ENCODE measurements at regions of chr15 and their contacts with region 1.

Region 1: GRCh38 chr15:70466895-70467529 is 296.3 kb downstream of the UACA start:
- DNase-seq: peak in 9 of 10 donors; percentile 38 to 95 (median 62)

Region 2: DNA sequence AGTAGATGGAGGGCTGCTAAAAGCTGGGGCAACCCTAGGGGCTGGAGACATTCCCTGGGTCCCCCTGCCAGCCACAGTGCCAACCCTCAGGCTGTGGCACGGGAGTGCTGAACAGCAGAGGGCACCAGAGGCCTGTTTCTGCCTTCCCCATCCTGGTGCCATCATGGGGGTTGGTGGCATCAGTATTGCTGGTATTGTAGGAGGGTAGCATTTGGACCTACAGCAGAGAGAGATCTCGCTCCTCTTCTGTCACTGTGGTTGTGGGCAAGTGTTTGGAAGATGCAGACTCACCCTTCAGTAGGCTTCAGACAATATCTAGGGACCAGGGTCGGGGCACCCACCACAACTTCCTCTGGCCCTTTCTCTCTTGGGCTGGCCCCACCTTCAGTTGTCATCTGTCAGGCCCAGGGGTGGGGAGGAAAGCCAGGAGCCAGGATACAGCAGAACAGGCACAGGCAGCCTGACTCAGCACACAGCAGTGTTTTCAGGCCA is 890.9 kb before region 1 on chr15:
- intact Hi-C with region 1: loop called (anchors 5 kb)
- DNase-seq: peak; percentile 45 to 95 (median 70)

Region 3: DNA sequence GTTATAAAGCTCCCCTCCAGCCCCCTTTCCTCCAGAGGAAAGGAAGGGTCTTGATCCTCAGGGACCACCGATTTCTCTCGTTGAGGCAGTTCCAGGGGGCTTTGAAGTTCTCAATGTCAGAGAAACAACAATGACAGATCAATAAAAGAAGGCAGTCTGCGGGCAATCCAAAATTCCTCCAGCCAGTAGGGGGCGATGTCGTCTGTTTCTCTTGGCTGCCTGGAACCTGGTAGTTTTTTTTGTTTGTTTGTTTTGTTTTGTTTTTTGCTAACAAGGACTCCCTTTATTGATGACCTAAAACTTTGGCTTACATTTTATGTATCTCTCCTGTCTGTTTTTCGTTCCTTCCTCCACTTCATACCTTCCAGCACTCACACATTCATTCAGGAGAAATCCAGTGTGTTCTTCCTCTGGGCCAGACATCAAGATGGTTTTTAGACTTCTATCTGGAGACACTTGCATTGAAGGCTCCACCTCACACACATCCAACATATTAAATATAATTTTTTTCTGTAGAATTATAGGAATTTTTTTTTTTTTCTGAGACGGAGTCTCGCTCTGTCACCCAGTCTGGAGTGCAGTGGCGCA is 737.8 kb before region 1 on chr15:
- intact Hi-C with region 1: loop called (anchors 10 kb)
- DNase-seq: peak in 1 of 10 donors; percentile 28

Region 4: GRCh38 chr15:70362886-70363285 is 104.1 kb before region 1 on chr15:
- intact Hi-C with region 1: no loop called
- DNase-seq: no peak